ENCODE measurements at regions of chr3 and their contacts with region 1.

Region 1: DNA sequence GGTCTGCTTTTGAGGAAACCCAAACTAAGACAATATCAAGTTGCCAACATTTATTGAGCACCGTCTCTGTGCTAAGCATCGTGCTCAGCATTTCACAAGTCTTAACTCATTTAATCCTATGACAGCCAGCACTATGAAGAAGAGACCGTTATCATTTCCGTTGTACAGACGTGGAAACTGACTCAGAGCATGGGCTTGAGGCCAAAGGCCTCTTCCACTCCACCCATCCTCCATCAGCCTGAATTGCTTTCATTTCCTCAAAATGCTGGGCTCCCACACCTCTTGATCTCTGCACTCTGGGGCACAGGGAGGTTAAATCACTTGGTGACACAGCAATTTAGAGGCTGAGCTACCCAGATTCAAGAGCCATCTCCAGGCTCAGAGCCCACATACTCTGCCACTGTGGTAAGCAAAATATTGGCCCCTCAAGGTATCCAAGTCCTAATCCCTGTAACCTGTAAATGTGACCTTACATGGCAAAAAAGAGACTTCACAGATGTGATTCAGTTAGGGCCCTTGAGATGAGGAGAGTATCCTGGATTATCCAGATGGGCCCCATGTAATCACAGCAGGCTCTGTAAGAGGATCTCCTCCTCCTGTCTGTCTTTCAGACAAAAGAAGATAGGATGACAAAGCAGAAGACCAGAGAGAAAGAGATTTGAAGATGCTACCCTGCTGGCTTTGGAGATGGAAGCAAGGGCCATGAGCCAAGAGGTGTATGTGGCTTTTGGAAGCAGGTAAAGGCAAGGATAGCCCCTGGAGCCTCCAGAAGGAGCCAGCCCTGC is 24.3 kb upstream of the FLNB start:
- DNase-seq: peak; percentile 97 to 99 (median 98)
- H3K4me3 ChIP-seq: peak overlapping the region in 1 of 3 experiments; percentile 57
- H3K4me3 Mint-ChIP-seq: peak overlapping the region; percentile 24 to 83
- H3K27ac ChIP-seq: peak overlapping the region; percentile 79 to 85
- H3K27ac Mint-ChIP-seq: peak overlapping the region; percentile 94 to 99 (median 98)
- H3K4me1 ChIP-seq: peaks cover 65 to 68% of the 10 kb centered on the region in 2 donors
- H3K4me1 Mint-ChIP-seq: peaks cover 75% of the 10 kb centered on the region
- H3K27me3 ChIP-seq: no peaks in the 10 kb centered on the region
- H3K27me3 Mint-ChIP-seq: peaks cover 0 to 15% (median 5%) of the 10 kb centered on the region in 3 donors
- CTCF ChIP-seq: no peak

Region 2: GRCh38 chr3:57951066-57951882 is 32.7 kb before region 1 on chr3:
- intact Hi-C with region 1: loop called in 1 of 2 experiments (anchors 5 kb)
- DNase-seq: peak; percentile 79 to 91 (median 89)
- H3K4me3 ChIP-seq: peak overlapping the region in 1 of 3 experiments; percentile 45
- H3K4me3 Mint-ChIP-seq: peak overlapping the region; percentile 47 to 72
- H3K27ac ChIP-seq: peak overlapping the region; percentile 11 to 77
- H3K27ac Mint-ChIP-seq: peak overlapping the region; percentile 82 to 92 (median 83)
- H3K4me1 ChIP-seq: peaks cover 24 to 48% of the 10 kb centered on the region in 2 donors
- H3K4me1 Mint-ChIP-seq: peaks cover 46% of the 10 kb centered on the region
- H3K27me3 ChIP-seq: no peaks in the 10 kb centered on the region
- H3K27me3 Mint-ChIP-seq: peaks cover 0 to 4% (median 4%) of the 10 kb centered on the region in 3 donors
- CTCF ChIP-seq: no peak

Region 3: DNA sequence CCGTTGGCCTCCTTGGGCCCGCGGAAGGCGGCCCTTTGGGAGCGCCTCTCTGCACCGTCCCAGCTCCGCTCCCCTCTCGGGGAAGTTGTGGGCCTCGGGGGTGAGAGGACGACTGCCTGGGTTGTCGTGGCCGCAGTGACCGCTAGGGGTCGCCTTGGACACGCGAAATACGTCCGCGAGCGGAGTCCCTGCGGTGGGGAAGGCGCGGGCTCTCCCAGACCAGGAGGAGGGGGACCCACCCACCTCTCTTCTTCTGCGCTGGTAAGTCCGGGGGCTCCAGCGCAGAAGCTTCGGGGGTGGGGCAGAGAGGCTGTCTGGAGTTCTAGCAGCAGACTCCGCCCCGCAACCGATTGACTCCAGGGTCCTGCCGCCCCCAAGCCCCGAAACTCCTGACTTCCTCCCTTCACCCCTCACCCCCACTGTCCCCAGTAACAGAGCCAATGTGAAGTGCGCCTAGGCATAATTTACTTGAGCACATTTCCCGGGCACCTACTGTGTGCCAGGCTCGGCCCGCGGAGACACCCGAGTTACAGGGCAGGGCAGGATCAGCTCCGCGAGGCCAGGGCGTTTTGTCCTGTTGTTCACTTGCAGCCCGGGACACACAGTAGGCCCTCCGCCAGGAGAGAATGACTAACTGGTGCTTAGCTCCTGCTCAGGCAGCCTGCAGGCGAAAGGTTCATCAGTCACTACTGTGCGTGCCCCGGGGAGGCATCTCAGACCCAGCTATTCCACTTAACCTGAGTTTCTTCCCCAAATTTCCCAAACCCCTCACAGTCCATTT is 194.0 kb after region 1 on chr3:
- intact Hi-C with region 1: no loop called
- DNase-seq: peak; percentile 78 to 82 (median 81)
- H3K4me3 ChIP-seq: peak overlapping the region; percentile 5 to 73 (median 37)
- H3K4me3 Mint-ChIP-seq: peak overlapping the region; percentile 67 to 90
- H3K27ac ChIP-seq: no peak overlapping the region
- H3K27ac Mint-ChIP-seq: peak overlapping the region in 1 of 7 donors; percentile 18
- H3K4me1 ChIP-seq: peaks cover 36 to 45% of the 10 kb centered on the region in 2 donors
- H3K4me1 Mint-ChIP-seq: peaks cover 42% of the 10 kb centered on the region
- H3K27me3 ChIP-seq: peaks cover 0 to 8% of the 10 kb centered on the region in 2 donors
- H3K27me3 Mint-ChIP-seq: peaks cover 10 to 19% (median 12%) of the 10 kb centered on the region in 3 donors
- CTCF ChIP-seq: peak; percentile 96